HEK293 (cell line): ENCODE measurements at regions of chr11 and their contacts with region 1.

Region 1: DNA sequence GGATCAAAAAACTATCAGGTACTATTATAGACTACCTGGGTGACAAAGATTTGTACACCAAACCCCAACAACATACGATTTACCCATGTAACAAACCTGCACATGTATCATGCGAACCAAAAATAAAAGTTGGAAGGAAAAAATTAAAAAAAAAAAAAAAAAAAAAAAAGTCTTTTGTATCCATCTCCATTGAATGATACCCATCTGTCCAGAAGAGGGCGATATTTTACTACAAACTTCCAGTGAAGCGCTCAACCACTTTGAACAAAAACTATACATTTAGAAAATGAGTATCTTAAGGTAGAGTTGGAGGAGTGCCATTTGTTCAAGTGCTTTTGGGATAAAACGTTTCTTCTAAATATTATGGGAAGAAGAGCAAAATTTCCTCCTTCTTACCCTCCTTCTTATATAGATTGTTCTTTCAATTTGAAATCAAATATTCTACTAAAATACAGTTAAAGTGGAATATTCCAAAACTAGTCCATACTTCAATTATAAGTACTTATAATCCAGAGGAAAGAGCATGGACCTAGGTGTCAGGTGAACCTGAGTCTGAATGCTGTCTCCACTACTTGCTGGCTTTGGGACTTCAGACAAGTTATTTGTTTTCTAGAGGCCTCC is 23.3 kb downstream of the ARL14EP start:
- H3K4me3 ChIP-seq: no peak overlapping the region
- H3K27ac ChIP-seq: no peak overlapping the region
- H3K4me1 ChIP-seq: no peaks in the 10 kb centered on the region
- CTCF ChIP-seq: no peak

Region 2: DNA sequence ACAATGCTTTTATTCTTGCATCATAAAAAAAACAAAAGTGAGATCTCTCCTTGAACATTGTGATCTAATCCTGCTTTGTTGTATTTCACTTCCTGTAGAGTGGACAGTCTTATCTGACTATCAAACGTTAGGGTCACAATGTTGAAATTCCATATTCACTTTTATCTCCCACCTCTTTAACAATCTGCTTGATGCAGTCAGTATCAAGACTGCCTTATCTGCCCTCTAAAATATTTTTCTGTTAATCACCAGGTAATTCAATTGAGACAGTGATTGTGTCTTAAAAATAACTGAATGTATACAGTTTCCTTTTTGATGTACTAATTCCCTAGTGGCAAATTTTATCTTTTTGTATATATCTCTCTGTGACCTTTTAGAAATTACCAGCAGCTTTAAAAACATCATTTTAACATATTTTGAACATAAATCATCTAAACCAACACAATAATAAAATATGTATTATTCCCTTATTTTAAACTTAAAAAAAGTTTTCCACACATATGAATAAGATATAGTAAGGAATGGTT is 383.1 kb after region 1 on chr11:
- CTCF ChIA-PET with region 1: interaction called, 11 read pairs
- POLR2A ChIA-PET with region 1: no interaction called
- H3K4me3 ChIP-seq: no peak overlapping the region
- H3K27ac ChIP-seq: no peak overlapping the region
- H3K4me1 ChIP-seq: no peaks in the 10 kb centered on the region
- CTCF ChIP-seq: no peak

Region 3: GRCh38 chr11:30855383-30856006 is 509.3 kb after region 1 on chr11:
- CTCF ChIA-PET with region 1: interaction called, 12 read pairs
- POLR2A ChIA-PET with region 1: no interaction called
- H3K4me3 ChIP-seq: no peak overlapping the region
- H3K27ac ChIP-seq: no peak overlapping the region
- H3K4me1 ChIP-seq: no peaks in the 10 kb centered on the region
- CTCF ChIP-seq: no peak

Region 4: GRCh38 chr11:30917859-30918478 is 571.8 kb after region 1 on chr11:
- CTCF ChIA-PET with region 1: interaction called, 36 read pairs
- POLR2A ChIA-PET with region 1: no interaction called
- H3K4me3 ChIP-seq: no peak overlapping the region
- H3K27ac ChIP-seq: no peak overlapping the region
- H3K4me1 ChIP-seq: no peaks in the 10 kb centered on the region
- CTCF ChIP-seq: no peak